Activated B cell treated with CpG ODN at 0.5 μM for 24 hours (primary cell): ENCODE measurements at regions of chr4 and their contacts with region 1.

Region 1: GRCh38 chr4:146916479-146917076 is 29.1 kb downstream of the TTC29 start:
- DNase-seq: no peak
- ATAC-seq: no peak
- H3K4me3 Mint-ChIP-seq: no peak overlapping the region
- H3K27ac Mint-ChIP-seq: no peak overlapping the region
- H3K4me1 Mint-ChIP-seq: no peaks in the 10 kb centered on the region
- H3K27me3 Mint-ChIP-seq: peaks cover 8% of the 10 kb centered on the region
- CTCF ChIP-seq: no peak

Region 2: GRCh38 chr4:145154573-145154972 is 1762.0 kb before region 1 on chr4:
- CTCF ChIA-PET with region 1: no interaction called
- POLR2A ChIA-PET with region 1: no interaction called
- intact Hi-C with region 1: loop called (anchors 10 kb)
- DNase-seq: no peak
- ATAC-seq: peak; percentile 37
- H3K4me3 Mint-ChIP-seq: no peak overlapping the region
- H3K27ac Mint-ChIP-seq: no peak overlapping the region
- H3K4me1 Mint-ChIP-seq: peaks cover 8% of the 10 kb centered on the region
- H3K27me3 Mint-ChIP-seq: no peaks in the 10 kb centered on the region
- CTCF ChIP-seq: no peak

Region 3: GRCh38 chr4:145840162-145840768 is 1076.3 kb before region 1 on chr4:
- CTCF ChIA-PET with region 1: no interaction called
- POLR2A ChIA-PET with region 1: no interaction called
- intact Hi-C with region 1: loop called (anchors 1 kb)
- DNase-seq: no peak
- ATAC-seq: peak; percentile 76
- H3K4me3 Mint-ChIP-seq: no peak overlapping the region
- H3K27ac Mint-ChIP-seq: no peak overlapping the region
- H3K4me1 Mint-ChIP-seq: peaks cover 11% of the 10 kb centered on the region
- H3K27me3 Mint-ChIP-seq: no peaks in the 10 kb centered on the region
- CTCF ChIP-seq: no peak

Region 4: GRCh38 chr4:145956288-145956890 is 960.2 kb before region 1 on chr4:
- CTCF ChIA-PET with region 1: no interaction called
- POLR2A ChIA-PET with region 1: no interaction called
- intact Hi-C with region 1: loop called (anchors 1 kb)
- DNase-seq: no peak
- ATAC-seq: peak; percentile 77
- H3K4me3 Mint-ChIP-seq: no peak overlapping the region
- H3K27ac Mint-ChIP-seq: no peak overlapping the region
- H3K4me1 Mint-ChIP-seq: peaks cover 6% of the 10 kb centered on the region
- H3K27me3 Mint-ChIP-seq: no peaks in the 10 kb centered on the region
- CTCF ChIP-seq: peak; percentile 87

Region 5: DNA sequence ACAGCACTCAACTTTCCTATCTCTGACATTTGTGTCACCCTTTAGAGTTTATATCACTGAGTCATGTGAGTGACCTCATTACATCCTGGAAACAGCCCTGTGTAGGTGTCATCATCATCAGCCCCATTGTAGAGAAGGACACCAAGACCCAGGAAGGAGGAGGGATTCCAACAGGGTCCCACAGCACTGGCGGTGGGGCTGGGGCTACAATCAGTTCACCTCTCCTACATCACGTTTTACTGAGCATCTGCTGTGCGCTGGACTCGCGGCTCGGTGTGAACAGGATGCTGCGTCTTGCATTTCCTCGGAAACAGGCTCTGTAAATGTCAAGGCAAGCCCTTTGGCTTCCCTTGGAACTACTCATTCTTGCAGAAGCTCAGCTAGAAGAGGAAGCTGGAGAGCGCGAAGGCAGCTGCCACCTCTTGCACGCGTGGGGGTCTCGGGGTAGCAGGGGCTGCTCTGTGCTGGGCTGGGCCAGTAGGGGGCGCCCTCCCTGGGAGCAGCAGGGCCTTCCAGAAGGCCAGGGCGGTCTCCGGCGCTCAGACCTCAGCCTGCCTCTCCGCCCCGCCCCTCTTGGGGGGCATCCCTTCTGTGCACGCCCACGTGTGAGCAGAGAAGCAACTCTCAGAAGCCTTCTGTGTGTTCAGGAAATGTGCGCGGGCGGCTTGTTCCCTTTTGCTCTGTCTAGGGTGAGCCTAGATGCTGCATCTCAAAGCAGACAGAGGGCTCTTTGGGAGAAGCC is 673.3 kb before region 1 on chr4:
- CTCF ChIA-PET with region 1: no interaction called
- POLR2A ChIA-PET with region 1: no interaction called
- intact Hi-C with region 1: loop called (anchors 1 kb)
- DNase-seq: peak; percentile 33
- ATAC-seq: peak; percentile 78
- H3K4me3 Mint-ChIP-seq: no peak overlapping the region
- H3K27ac Mint-ChIP-seq: no peak overlapping the region
- H3K4me1 Mint-ChIP-seq: peaks cover 12% of the 10 kb centered on the region
- H3K27me3 Mint-ChIP-seq: no peaks in the 10 kb centered on the region
- CTCF ChIP-seq: no peak

Region 6: GRCh38 chr4:146776691-146777090 is 139.9 kb before region 1 on chr4:
- CTCF ChIA-PET with region 1: no interaction called
- POLR2A ChIA-PET with region 1: no interaction called
- intact Hi-C with region 1: no loop called
- DNase-seq: no peak
- ATAC-seq: no peak
- H3K4me3 Mint-ChIP-seq: no peak overlapping the region
- H3K27ac Mint-ChIP-seq: no peak overlapping the region
- H3K4me1 Mint-ChIP-seq: no peaks in the 10 kb centered on the region
- H3K27me3 Mint-ChIP-seq: peaks cover 2% of the 10 kb centered on the region
- CTCF ChIP-seq: no peak

Region 7: GRCh38 chr4:146932111-146932510 is 15.5 kb after region 1 on chr4:
- CTCF ChIA-PET with region 1: no interaction called
- POLR2A ChIA-PET with region 1: no interaction called
- intact Hi-C with region 1: no loop called
- DNase-seq: no peak
- ATAC-seq: no peak
- H3K4me3 Mint-ChIP-seq: no peak overlapping the region
- H3K27ac Mint-ChIP-seq: no peak overlapping the region
- H3K4me1 Mint-ChIP-seq: no peaks in the 10 kb centered on the region
- H3K27me3 Mint-ChIP-seq: peaks cover 4% of the 10 kb centered on the region
- CTCF ChIP-seq: no peak

Region 8: DNA sequence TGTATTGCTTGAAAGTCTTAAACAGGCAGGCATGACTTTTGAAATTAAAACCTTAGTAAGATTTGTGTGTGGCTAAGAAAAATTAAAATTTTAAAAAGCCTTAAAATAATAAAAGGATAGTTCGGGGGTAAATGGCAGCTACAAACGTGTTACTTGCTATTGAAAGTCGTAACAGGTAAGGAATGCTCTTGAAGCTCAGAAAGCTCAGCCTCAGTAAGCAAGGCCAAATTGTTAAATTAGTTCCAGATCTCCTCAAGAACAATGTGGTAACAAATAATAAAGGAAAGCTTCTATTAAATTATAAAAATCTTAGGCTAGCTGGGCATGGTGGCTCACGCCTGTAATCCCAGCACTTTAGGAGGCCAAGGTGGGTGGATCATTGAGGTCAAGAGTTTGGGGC is 741.9 kb after region 1 on chr4:
- CTCF ChIA-PET with region 1: no interaction called
- POLR2A ChIA-PET with region 1: no interaction called
- intact Hi-C with region 1: no loop called
- DNase-seq: no peak
- ATAC-seq: no peak
- H3K4me3 Mint-ChIP-seq: no peak overlapping the region
- H3K27ac Mint-ChIP-seq: no peak overlapping the region
- H3K4me1 Mint-ChIP-seq: no peaks in the 10 kb centered on the region
- H3K27me3 Mint-ChIP-seq: no peaks in the 10 kb centered on the region
- CTCF ChIP-seq: no peak